Esophagus muscularis mucosa (tissue), 4 donors: ENCODE measurements at regions of chr16 and their contacts with region 1.

Region 1: DNA sequence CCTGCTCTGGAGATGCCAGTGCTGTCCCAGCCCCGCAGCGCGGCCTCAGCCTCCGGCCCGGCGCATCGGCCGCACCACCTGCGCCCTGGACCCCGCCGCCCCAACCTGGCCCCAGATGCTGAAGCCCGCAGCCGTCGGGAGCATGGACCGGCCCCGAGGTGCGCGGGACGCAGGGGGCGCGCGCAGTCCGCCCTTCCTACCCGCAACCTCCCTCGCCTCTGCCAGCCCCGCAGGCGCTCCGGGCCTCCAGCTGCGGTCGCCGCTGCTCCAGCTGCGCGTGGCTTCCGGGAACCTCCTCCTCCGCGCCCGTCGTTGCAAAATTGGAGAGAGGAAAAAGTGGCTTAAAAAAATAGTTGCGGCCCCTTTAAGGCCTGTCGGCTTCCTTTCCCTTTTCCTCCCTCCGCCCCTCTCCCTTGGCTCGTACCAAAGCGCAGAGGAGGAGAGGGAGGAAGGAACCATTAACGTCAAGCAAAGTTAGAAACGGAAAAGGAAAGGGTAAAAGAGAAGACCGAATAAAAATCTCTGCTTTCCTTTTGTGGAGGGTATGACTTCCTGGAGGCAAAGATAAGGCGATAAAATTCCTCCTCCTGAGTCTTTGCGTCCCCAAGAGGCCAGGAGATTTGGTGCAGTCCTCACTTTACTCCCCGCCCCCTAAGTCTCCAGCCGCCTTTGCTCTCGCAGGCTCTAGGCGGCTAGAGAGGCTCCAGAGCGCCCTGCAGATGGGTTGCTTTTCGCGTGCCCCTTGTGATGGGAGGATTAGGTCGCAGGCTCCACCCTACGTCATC is at the start of gene CDIPT:
- DNase-seq: peak; percentile 97
- H3K4me3 ChIP-seq: peak within 1 kb of the TSS; percentile 67 to 99 (median 78)
- H3K27ac ChIP-seq: peak within 1 kb of the TSS; percentile 85 to 94 (median 86)
- H3K4me1 ChIP-seq: peaks cover 17 to 29% (median 26%) of the 10 kb centered on the region in 4 donors
- H3K27me3 ChIP-seq: no peaks in the 10 kb centered on the region
- CTCF ChIP-seq: peak; percentile 52 to 84 (median 63)
- EP300 ChIP-seq: no peak
- POLR2A ChIP-seq: peak; percentile 2
- total RNA-seq, gene CDIPT: 105 to 178 (median 141) TPM

Region 2: GRCh38 chr16:29700253-29700987 is 162.7 kb before region 1 on chr16:
- intact Hi-C with region 1: no loop called
- DNase-seq: no peak
- H3K4me3 ChIP-seq: no peak overlapping the region
- H3K27ac ChIP-seq: no peak overlapping the region
- H3K4me1 ChIP-seq: peaks cover 0 to 5% (median 4%) of the 10 kb centered on the region in 4 donors
- H3K27me3 ChIP-seq: no peaks in the 10 kb centered on the region
- CTCF ChIP-seq: peak; percentile 89 to 96 (median 92)
- EP300 ChIP-seq: no peak
- POLR2A ChIP-seq: no peak

Region 3: GRCh38 chr16:29815793-29816693 is 47.0 kb before region 1 on chr16 and contains the start of gene PAGR1:
- intact Hi-C with region 1: no loop called
- DNase-seq: peak; percentile 99
- H3K4me3 ChIP-seq: peak within 1 kb of the TSS; percentile 60 to 84 (median 70)
- H3K27ac ChIP-seq: peak within 1 kb of the TSS; percentile 95 to 96 (median 96)
- H3K4me1 ChIP-seq: peaks cover 64 to 88% (median 83%) of the 10 kb centered on the region in 4 donors
- H3K27me3 ChIP-seq: no peaks in the 10 kb centered on the region
- CTCF ChIP-seq: peak; percentile 89 to 96 (median 93)
- EP300 ChIP-seq: no peak
- POLR2A ChIP-seq: peak; percentile 41
- total RNA-seq, gene PAGR1: 20.9 to 26.9 (median 26.5) TPM

Region 4: GRCh38 chr16:30005341-30006094 is 142.4 kb after region 1 on chr16:
- intact Hi-C with region 1: loop called (anchors 10 kb)
- DNase-seq: no peak
- H3K4me3 ChIP-seq: peak overlapping the region in 1 of 4 donors; percentile 15
- H3K27ac ChIP-seq: no peak overlapping the region
- H3K4me1 ChIP-seq: peaks cover 6 to 20% (median 18%) of the 10 kb centered on the region in 4 donors
- H3K27me3 ChIP-seq: peaks cover 0 to 35% (median 17%) of the 10 kb centered on the region in 4 donors
- CTCF ChIP-seq: peak; percentile 74 to 94 (median 80)
- EP300 ChIP-seq: no peak
- POLR2A ChIP-seq: no peak